Body of pancreas (tissue), 4 donors: ENCODE measurements at regions of chr6 and their contacts with region 1.

Region 1: GRCh38 chr6:138001750-138002349 is 105.4 kb downstream of the PERP start:
- DNase-seq: peak; percentile 65 to 75 (median 73)
- ATAC-seq: peak; percentile 71
- H3K4me3 ChIP-seq: no peak overlapping the region
- H3K27ac ChIP-seq: no peak overlapping the region
- H3K4me1 ChIP-seq: no peaks in the 10 kb centered on the region
- H3K27me3 ChIP-seq: no peaks in the 10 kb centered on the region
- CTCF ChIP-seq: peak; percentile 67 to 95 (median 78)
- POLR2A ChIP-seq: no peak

Region 2: DNA sequence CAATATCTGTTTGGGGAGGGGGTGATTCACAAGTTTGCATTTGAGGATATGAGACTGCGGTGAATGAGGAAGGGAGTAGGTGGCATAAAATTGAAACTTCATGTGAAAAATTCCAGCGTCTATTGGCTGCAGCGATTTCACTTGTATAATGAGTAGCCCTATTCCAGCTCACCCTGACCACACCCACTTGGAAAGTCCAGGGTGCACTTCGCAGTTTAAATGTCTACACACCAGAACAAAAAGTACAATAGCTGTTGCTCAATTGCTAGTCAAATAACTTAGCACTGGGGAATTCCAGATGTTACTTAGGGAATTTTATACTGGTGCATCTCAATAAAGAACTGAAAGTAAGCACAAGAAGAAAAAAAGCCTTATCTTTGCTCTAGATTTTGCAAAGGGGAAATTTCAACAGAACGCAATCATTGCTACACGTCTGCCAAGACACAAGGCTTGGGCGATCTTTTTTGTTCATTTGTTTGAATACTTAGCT is 128.5 kb before region 1 on chr6:
- intact Hi-C with region 1: no loop called
- DNase-seq: peak; percentile 69 to 91 (median 82)
- ATAC-seq: peak; percentile 95
- H3K4me3 ChIP-seq: no peak overlapping the region
- H3K27ac ChIP-seq: peak overlapping the region in 3 of 4 donors; percentile 28 to 75 (median 31)
- H3K4me1 ChIP-seq: peaks cover 58% of the 10 kb centered on the region
- H3K27me3 ChIP-seq: no peaks in the 10 kb centered on the region
- CTCF ChIP-seq: no peak
- POLR2A ChIP-seq: peak in 1 of 3 donors; percentile 13

Region 3: DNA sequence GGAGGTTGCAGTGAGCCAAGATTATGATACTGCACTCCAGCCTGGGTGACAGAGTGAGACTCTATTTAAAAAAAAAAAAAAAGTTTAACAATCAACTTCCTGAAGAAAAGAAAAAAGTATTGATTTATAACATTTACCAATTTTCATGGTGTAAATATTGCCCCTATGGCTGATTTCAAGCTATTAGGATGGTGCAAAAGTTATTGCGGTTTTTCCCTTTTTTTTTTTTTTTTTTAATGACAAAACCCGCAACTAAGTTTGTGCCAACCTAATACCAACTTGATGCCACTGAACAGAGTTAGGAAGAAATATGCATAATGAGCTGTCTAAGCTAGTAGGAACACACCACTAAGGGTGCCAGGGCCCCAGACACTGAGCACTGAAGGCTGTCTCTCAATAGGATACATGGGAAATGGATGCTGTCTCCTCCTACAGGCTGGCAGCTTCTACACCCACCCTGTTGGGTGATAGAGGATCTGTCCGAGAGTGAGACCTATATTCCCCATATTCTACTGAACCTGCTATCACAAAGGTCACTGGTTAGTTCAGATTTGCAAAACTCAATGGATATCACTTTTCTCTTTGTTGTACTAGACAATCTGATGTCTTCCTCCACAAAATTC is 111.8 kb after region 1 on chr6:
- intact Hi-C with region 1: loop called (anchors 5 kb)
- DNase-seq: no peak
- ATAC-seq: no peak
- H3K4me3 ChIP-seq: no peak overlapping the region
- H3K27ac ChIP-seq: no peak overlapping the region
- H3K4me1 ChIP-seq: peaks cover 5% of the 10 kb centered on the region
- H3K27me3 ChIP-seq: no peaks in the 10 kb centered on the region
- CTCF ChIP-seq: no peak
- POLR2A ChIP-seq: no peak

Region 4: DNA sequence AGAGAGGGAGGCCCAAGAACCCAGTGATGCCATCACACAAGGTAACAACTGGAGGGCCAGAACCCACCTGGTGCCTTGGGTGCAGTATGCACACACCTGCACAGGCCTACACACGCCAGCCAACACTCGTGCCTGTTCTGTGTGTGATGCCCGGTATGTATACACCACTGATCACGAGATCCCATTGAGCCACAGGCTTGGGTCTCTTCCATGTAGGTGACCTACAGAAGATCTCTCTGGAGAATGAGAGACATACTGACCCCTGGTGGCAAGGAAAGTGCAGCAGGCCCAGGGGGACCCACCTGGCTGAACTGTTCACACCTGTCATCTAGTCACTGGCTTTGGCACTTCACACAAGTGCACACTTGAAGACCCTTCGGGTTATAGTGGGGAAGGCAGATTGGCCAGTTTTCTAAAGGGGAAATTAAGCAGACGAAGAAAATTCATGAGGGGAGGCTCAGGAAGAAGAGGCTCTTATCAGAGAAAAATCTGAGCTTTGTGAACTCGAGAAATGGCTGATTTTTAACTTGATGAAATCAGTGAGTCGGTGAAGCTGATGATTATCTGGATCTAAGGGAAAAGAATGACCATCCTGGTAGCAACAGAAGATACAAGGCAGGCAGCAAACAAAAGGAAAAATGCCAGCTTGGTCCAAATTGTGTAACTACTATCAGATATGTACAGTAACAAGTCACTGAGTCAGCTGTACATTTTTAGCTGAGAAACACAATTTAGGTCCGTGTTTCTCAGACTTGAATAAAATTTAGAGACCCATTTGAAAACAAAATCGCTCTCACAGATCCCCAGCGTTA is 285.5 kb after region 1 on chr6:
- intact Hi-C with region 1: loop called (anchors 10 kb)
- DNase-seq: peak; percentile 81 to 85 (median 82)
- ATAC-seq: peak; percentile 87
- H3K4me3 ChIP-seq: no peak overlapping the region
- H3K27ac ChIP-seq: no peak overlapping the region
- H3K4me1 ChIP-seq: no peaks in the 10 kb centered on the region
- H3K27me3 ChIP-seq: no peaks in the 10 kb centered on the region
- CTCF ChIP-seq: peak; percentile 59 to 82 (median 76)
- POLR2A ChIP-seq: no peak